ENCODE measurements at regions of chr1 and their contacts with region 1.

Region 1: GRCh38 chr1:23598424-23598823 is 39.1 kb upstream of the ID3 start:
- DNase-seq: no peak
- ATAC-seq: no peak
- H3K4me3 Mint-ChIP-seq: no peak overlapping the region
- H3K27ac Mint-ChIP-seq: peak overlapping the region; percentile 34
- H3K4me1 Mint-ChIP-seq: peaks cover 86% of the 10 kb centered on the region
- H3K27me3 Mint-ChIP-seq: no peaks in the 10 kb centered on the region
- CTCF ChIP-seq: no peak

Region 2: GRCh38 chr1:23613191-23614031 is 15.0 kb after region 1 on chr1:
- CTCF ChIA-PET with region 1: interaction called, 11 read pairs
- POLR2A ChIA-PET with region 1: interaction called, 44 read pairs
- intact Hi-C with region 1: loop called (anchors 2 kb)
- DNase-seq: peak; percentile 85
- ATAC-seq: peak; percentile 63
- H3K4me3 Mint-ChIP-seq: peak overlapping the region; percentile 28
- H3K27ac Mint-ChIP-seq: peak overlapping the region; percentile 89
- H3K4me1 Mint-ChIP-seq: peaks cover 69% of the 10 kb centered on the region
- H3K27me3 Mint-ChIP-seq: no peaks in the 10 kb centered on the region
- CTCF ChIP-seq: no peak

Region 3: GRCh38 chr1:23619299-23620188 is 21.1 kb after region 1 on chr1:
- CTCF ChIA-PET with region 1: interaction called, 3 read pairs
- POLR2A ChIA-PET with region 1: interaction called, 44 read pairs
- intact Hi-C with region 1: loop called (anchors 2 kb)
- DNase-seq: peak; percentile 91
- ATAC-seq: peak; percentile 72
- H3K4me3 Mint-ChIP-seq: peak overlapping the region; percentile 68
- H3K27ac Mint-ChIP-seq: peak overlapping the region; percentile 82
- H3K4me1 Mint-ChIP-seq: peaks cover 81% of the 10 kb centered on the region
- H3K27me3 Mint-ChIP-seq: no peaks in the 10 kb centered on the region
- CTCF ChIP-seq: no peak

Region 4: DNA sequence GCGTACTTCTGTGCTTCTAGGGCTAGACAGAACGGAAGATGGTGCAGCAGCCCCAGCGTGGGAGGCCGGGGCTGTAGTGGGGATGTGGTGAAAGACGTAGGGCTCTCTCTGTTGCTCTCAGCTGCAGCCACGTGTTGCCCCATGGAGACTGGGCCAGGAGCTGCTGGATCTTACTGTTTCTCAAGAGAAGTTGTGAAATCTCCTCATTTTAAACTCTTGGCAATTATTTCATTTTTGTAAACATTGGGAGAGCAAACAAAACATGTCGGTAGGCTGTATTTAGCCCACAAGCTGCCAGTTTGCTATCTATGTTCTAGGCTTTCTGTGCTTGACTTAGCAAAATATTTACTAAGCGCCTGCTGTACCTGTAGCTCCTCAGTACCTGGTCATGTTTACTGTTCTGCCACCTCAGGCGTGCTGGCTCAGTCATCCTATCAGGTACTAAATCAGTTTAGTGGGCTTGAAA is 129.0 kb after region 1 on chr1:
- CTCF ChIA-PET with region 1: no interaction called
- POLR2A ChIA-PET with region 1: no interaction called
- intact Hi-C with region 1: no loop called
- DNase-seq: no peak
- ATAC-seq: no peak
- H3K4me3 Mint-ChIP-seq: no peak overlapping the region
- H3K27ac Mint-ChIP-seq: no peak overlapping the region
- H3K4me1 Mint-ChIP-seq: peaks cover 12% of the 10 kb centered on the region
- H3K27me3 Mint-ChIP-seq: no peaks in the 10 kb centered on the region
- CTCF ChIP-seq: no peak